PC-9 (cell line): ENCODE measurements at regions of chr14 and their contacts with region 1.

Region 1: DNA sequence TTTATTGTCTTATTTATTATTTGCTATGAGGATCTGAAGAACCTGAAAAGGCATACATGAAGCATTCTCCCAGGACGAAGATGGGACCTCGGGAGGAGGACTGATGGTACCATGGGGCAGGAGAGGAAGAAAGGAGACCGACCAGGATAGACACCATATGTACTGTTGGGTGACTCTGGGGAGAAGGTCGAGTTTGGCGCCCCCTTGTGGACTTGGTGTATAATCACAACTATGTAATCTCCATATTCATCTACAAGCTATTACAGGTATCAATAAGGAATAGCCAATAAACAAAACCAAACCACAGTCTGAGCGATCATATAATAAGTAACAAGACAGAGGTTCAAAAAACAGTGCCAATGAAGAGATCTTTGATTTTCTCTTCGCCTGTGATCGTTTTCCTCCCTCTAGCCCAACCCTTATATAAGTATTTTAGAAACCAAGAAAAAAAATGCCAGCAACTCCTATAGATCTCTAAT is 139.1 kb downstream of the SPTSSA start:
- DNase-seq: peak in 1 of 2 experiments; percentile 38
- H3K4me3 ChIP-seq: no peak overlapping the region
- H3K27ac ChIP-seq: no peak overlapping the region
- H3K4me1 ChIP-seq: no peaks in the 10 kb centered on the region
- H3K27me3 ChIP-seq: no peaks in the 10 kb centered on the region
- CTCF ChIP-seq: peak; percentile 82

Region 2: DNA sequence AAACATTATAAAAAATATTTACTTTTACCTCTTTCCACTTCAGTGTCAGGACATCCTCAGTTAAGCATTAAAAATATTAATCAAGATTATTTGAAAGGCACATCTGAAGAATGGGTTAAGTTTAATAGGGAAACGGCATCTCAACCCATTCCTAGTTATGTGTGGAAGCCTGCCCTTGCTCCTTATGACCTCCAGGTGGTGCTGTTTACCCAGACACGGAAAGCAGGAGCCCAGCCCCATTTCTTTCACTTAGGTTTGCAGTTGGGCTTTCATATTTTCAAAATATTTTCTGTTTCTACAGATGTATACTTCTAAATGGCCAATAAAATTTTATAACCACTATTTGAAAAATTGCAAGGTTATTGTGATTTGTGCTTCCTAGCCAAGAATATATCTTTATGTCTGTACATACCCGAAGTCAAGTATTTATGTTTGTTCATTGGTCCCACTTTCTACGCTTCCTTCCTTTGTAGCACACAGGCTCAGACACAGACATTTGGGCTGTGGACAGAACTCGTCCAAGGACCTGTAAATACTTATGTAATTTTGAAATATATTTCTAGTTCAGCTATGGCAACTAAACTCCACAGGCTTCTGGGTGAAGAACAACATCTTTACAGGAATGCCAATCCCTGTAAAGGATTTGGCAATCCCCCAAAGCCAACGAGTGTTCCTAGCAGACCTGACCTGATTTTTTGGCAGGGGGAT is 1746.7 kb before region 1 on chr14:
- CTCF ChIA-PET with region 1: no interaction called
- POLR2A ChIA-PET with region 1: no interaction called
- intact Hi-C with region 1: loop called (anchors 1 kb)
- DNase-seq: peak; percentile 15 to 39
- H3K4me3 ChIP-seq: no peak overlapping the region
- H3K27ac ChIP-seq: no peak overlapping the region
- H3K4me1 ChIP-seq: no peaks in the 10 kb centered on the region
- H3K27me3 ChIP-seq: no peaks in the 10 kb centered on the region
- CTCF ChIP-seq: peak; percentile 88

Region 3: DNA sequence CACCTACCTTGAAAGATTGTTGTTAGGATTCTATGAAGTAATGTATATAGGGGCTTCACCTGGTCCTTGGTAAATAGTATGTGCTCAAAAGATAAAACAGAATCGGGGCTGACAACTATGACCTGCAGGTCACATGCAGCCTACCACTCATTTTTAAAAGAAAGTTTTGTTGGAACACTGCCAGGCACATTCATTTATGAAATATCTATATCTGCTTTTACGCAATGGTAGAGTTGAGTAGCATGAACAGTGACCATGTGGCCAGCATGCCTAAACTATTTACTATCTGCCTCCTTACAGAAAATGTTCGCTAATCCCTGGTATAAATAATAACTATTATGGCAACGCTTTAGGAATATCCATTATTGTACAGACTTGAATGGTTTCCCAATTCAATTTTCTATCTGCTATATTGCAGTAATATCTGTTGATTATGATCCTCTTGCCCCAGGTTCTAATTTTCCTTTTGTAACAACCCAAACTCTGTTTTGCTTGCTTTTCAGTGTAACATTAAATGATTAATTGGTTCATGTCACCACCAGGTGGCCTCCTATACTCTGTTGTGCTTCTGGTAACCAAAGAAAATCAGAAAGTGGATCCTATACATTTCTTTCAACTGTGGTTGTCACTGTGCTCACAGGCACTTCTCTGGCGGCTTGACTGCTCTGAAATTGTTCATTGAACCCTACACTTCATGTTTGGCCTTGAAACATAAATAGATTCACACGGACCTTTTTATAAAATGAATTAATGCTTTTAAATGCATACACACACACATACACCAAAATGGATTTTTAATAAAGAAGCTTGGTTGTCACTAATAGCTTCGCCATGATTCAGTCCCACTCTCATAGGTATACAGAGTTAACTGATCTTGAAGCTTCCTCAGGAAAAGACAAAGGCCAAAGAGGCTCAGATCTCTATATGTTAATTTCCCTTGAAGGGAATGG is 1612.0 kb before region 1 on chr14:
- CTCF ChIA-PET with region 1: no interaction called
- POLR2A ChIA-PET with region 1: no interaction called
- intact Hi-C with region 1: loop called (anchors 5 kb)
- DNase-seq: no peak
- H3K4me3 ChIP-seq: no peak overlapping the region
- H3K27ac ChIP-seq: no peak overlapping the region
- H3K4me1 ChIP-seq: no peaks in the 10 kb centered on the region
- H3K27me3 ChIP-seq: no peaks in the 10 kb centered on the region
- CTCF ChIP-seq: peak; percentile 72

Region 4: GRCh38 chr14:34310724-34311123 is 12.3 kb before region 1 on chr14:
- CTCF ChIA-PET with region 1: interaction called, 14 read pairs
- POLR2A ChIA-PET with region 1: no interaction called
- intact Hi-C with region 1: no loop called
- DNase-seq: no peak
- H3K4me3 ChIP-seq: no peak overlapping the region
- H3K27ac ChIP-seq: no peak overlapping the region
- H3K4me1 ChIP-seq: no peaks in the 10 kb centered on the region
- H3K27me3 ChIP-seq: no peaks in the 10 kb centered on the region
- CTCF ChIP-seq: no peak